HCT116 (cell line): ENCODE measurements at regions of chr9 and their contacts with region 1.

Region 1: GRCh38 chr9:111068771-111069170 is 30.5 kb upstream of the LPAR1 start:
- DNase-seq: no peak
- ATAC-seq: no peak
- H3K4me3 ChIP-seq: no peak overlapping the region
- H3K27ac ChIP-seq: no peak overlapping the region
- H3K4me1 ChIP-seq: no peaks in the 10 kb centered on the region
- H3K27me3 ChIP-seq: no peaks in the 10 kb centered on the region
- CTCF ChIP-seq: no peak
- POLR2A ChIP-seq: no peak
- RAD21 ChIP-seq: no peak

Region 2: DNA sequence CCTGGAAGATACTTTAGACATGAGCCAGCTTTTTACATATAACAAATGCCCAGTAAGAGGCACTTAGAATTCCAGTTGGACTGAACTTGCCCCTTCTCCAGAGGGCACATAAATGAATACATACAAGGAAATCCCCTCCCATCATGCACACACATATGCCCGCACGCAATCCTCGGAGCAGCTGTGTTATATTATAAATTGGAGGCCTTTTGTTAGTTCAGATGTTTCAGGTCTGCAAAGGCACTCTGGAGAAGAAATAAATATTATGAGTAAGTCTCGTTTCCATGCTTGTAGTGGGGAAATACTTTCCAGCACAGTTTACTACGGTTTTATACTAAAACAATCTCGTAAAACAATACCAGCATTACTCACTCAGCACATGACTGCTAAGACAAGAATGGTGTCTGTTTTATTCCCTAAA is 417.8 kb before region 1 on chr9:
- CTCF ChIA-PET with region 1: no interaction called
- POLR2A ChIA-PET with region 1: no interaction called
- RAD21 ChIA-PET with region 1: no interaction called
- intact Hi-C with region 1: loop called (anchors 10 kb)
- DNase-seq: no peak
- ATAC-seq: no peak
- H3K4me3 ChIP-seq: no peak overlapping the region
- H3K27ac ChIP-seq: no peak overlapping the region
- H3K4me1 ChIP-seq: no peaks in the 10 kb centered on the region
- H3K27me3 ChIP-seq: no peaks in the 10 kb centered on the region
- CTCF ChIP-seq: no peak
- POLR2A ChIP-seq: no peak
- RAD21 ChIP-seq: no peak

Region 3: GRCh38 chr9:111000202-111000601 is 68.6 kb before region 1 on chr9:
- CTCF ChIA-PET with region 1: no interaction called
- POLR2A ChIA-PET with region 1: no interaction called
- RAD21 ChIA-PET with region 1: no interaction called
- intact Hi-C with region 1: loop called (anchors 10 kb)
- DNase-seq: no peak
- ATAC-seq: no peak
- H3K4me3 ChIP-seq: no peak overlapping the region
- H3K27ac ChIP-seq: no peak overlapping the region
- H3K4me1 ChIP-seq: no peaks in the 10 kb centered on the region
- H3K27me3 ChIP-seq: no peaks in the 10 kb centered on the region
- CTCF ChIP-seq: no peak
- POLR2A ChIP-seq: no peak
- RAD21 ChIP-seq: no peak